PC-3 (cell line): ENCODE measurements at regions of chr9 and their contacts with region 1.

Region 1: GRCh38 chr9:34010979-34011378 is 37.7 kb downstream of the UBAP2 start:
- DNase-seq: peak; percentile 47
- ATAC-seq: no peak
- H3K4me3 ChIP-seq: no peak overlapping the region
- H3K27ac ChIP-seq: no peak overlapping the region
- H3K4me1 ChIP-seq: no peaks in the 10 kb centered on the region
- H3K27me3 ChIP-seq: no peaks in the 10 kb centered on the region
- CTCF ChIP-seq: peak; percentile 59

Region 2: DNA sequence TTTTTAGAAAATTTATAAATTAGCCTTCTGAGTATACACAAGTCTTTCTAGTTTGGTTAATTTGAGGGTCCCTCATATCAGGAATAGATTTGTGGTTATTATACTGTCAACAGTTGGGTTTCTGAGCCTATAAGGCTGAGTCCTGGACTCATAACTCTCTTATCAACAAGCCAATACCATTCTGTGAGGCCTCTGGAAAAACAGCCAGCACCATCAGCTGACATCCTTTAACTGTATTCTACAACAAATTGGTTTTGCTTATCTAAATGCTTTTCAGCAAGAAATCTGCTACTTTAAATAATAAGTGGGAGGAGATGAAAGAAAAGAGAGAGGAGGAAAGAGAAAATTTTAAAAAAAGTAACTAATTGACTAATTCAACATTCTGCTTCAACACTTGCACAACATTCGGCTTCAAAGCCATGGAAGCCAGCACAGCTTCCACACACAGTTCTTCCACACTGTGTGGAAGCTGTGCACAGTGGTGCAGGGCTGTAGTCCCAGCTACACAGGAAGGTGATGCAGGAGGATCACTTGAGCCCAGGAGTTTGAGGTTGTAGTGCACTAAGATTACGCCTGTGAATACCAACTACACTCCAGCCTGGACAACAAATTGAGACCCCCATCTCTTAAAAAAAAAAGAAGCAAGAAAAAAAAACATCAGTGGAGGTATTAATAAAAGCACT is 46.8 kb before region 1 on chr9:
- CTCF ChIA-PET with region 1: no interaction called
- POLR2A ChIA-PET with region 1: no interaction called
- intact Hi-C with region 1: no loop called
- DNase-seq: no peak
- ATAC-seq: no peak
- H3K4me3 ChIP-seq: no peak overlapping the region
- H3K27ac ChIP-seq: no peak overlapping the region
- H3K4me1 ChIP-seq: no peaks in the 10 kb centered on the region
- H3K27me3 ChIP-seq: no peaks in the 10 kb centered on the region
- CTCF ChIP-seq: no peak

Region 3: DNA sequence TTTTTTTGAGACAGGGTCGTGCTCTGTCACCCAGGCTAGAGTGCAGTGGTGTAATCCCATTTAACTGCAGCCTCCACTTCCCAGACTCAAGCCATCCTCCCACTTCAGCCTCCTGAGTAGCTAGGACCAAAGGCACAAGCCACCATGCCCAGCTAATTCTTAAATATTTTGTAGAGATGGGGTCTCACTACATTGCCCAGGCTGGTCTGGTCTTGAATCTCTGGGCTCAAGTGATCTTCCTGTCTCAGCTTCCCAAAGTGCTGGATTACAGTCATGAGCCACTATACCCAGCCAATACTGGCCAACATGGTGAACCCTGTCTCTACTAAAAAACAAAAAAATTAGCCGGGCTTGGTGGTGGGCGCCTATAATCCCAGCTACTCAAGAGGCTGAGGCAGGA is 108.7 kb after region 1 on chr9:
- CTCF ChIA-PET with region 1: no interaction called
- POLR2A ChIA-PET with region 1: interaction called, 19 read pairs
- intact Hi-C with region 1: no loop called
- DNase-seq: no peak
- ATAC-seq: no peak
- H3K4me3 ChIP-seq: no peak overlapping the region
- H3K27ac ChIP-seq: no peak overlapping the region
- H3K4me1 ChIP-seq: peaks cover 7% of the 10 kb centered on the region
- H3K27me3 ChIP-seq: no peaks in the 10 kb centered on the region
- CTCF ChIP-seq: no peak

Region 4: DNA sequence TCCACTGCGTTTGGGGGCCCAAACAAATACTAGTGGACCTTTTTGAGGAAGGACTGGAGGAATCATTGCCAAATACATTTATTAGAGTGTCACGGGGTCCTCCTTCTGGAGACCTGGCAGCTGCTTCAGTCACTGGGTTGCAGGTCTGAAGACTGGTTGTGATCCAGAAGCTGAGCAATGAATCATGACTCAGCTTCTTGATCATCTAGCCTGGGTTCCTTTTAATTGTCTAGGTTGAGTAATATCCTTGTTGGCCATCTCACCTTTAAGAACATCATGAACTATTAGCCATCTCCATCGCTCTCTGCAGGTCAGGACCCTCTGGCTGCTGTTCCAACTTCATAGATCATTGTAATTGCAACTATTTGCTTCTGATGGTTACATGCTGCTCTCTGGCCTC is 152.5 kb after region 1 on chr9:
- CTCF ChIA-PET with region 1: interaction called, 11 read pairs
- POLR2A ChIA-PET with region 1: no interaction called
- intact Hi-C with region 1: no loop called
- DNase-seq: peak; percentile 76
- ATAC-seq: peak; percentile 87
- H3K4me3 ChIP-seq: no peak overlapping the region
- H3K27ac ChIP-seq: peak overlapping the region; percentile 92
- H3K4me1 ChIP-seq: peaks cover 21% of the 10 kb centered on the region
- H3K27me3 ChIP-seq: no peaks in the 10 kb centered on the region
- CTCF ChIP-seq: no peak